Right lobe of liver (tissue), 6 donors: ENCODE measurements at regions of chr9 and their contacts with region 1.

Region 1: DNA sequence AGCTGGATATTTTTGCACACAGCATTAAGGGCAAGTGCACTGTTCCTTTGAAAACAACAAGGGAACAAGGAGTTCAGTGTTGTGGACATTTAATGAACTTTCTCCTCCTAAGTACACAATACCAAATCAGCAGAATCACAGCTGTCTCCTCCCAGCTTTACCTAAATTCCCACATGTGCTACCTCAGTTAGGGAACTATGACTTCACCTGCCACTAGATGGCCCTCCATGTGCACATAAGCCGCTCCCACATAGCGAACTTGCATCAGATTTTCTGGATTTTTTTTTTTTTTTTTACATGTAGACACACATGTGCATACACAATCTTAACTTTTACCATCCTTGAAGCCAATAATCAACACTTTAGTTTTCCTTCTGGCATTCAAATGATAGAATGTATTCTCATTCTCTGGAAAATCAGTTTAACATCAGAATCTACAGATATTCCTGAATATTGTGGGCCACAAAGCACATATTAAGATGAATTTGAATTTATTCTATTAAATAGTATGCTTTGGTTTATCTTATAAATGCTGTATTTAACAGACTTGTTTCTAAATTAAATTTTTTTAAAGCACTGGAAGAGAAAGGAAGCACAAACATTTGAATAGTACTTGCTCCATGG is 123.6 kb downstream of the PALM2AKAP2 start:
- DNase-seq: peak in 1 of 3 donors; percentile 74
- ATAC-seq: peak; percentile 67 to 79 (median 78)
- H3K4me3 ChIP-seq: no peak overlapping the region
- H3K27ac ChIP-seq: peak overlapping the region in 2 of 3 donors; percentile 56 to 84
- H3K4me1 ChIP-seq: peaks cover 0 to 45% (median 21%) of the 10 kb centered on the region in 4 donors
- H3K27me3 ChIP-seq: no peaks in the 10 kb centered on the region
- CTCF ChIP-seq: peak; percentile 67 to 87 (median 78)
- POLR2A ChIP-seq: no peak

Region 2: GRCh38 chr9:110050925-110051355 is 147.3 kb after region 1 on chr9:
- intact Hi-C with region 1: loop called in 1 of 2 experiments (anchors 5 kb)
- DNase-seq: no peak
- ATAC-seq: peak; percentile 18 to 72 (median 38)
- H3K4me3 ChIP-seq: no peak overlapping the region
- H3K27ac ChIP-seq: peak overlapping the region in 1 of 3 donors; percentile 76
- H3K4me1 ChIP-seq: peaks cover 0 to 23% (median 0%) of the 10 kb centered on the region in 4 donors
- H3K27me3 ChIP-seq: no peaks in the 10 kb centered on the region
- CTCF ChIP-seq: no peak
- POLR2A ChIP-seq: no peak

Region 3: GRCh38 chr9:110152704-110153374 is 249.2 kb after region 1 on chr9:
- intact Hi-C with region 1: loop called (anchors 10 kb)
- DNase-seq: no peak
- ATAC-seq: peak; percentile 7 to 53 (median 44)
- H3K4me3 ChIP-seq: no peak overlapping the region
- H3K27ac ChIP-seq: peak overlapping the region in 1 of 3 donors; percentile 7
- H3K4me1 ChIP-seq: peaks cover 0 to 10% (median 4%) of the 10 kb centered on the region in 4 donors
- H3K27me3 ChIP-seq: no peaks in the 10 kb centered on the region
- CTCF ChIP-seq: peak; percentile 63 to 81 (median 69)
- POLR2A ChIP-seq: no peak